ENCODE measurements at regions of chr12 and their contacts with region 1.

Region 1: DNA sequence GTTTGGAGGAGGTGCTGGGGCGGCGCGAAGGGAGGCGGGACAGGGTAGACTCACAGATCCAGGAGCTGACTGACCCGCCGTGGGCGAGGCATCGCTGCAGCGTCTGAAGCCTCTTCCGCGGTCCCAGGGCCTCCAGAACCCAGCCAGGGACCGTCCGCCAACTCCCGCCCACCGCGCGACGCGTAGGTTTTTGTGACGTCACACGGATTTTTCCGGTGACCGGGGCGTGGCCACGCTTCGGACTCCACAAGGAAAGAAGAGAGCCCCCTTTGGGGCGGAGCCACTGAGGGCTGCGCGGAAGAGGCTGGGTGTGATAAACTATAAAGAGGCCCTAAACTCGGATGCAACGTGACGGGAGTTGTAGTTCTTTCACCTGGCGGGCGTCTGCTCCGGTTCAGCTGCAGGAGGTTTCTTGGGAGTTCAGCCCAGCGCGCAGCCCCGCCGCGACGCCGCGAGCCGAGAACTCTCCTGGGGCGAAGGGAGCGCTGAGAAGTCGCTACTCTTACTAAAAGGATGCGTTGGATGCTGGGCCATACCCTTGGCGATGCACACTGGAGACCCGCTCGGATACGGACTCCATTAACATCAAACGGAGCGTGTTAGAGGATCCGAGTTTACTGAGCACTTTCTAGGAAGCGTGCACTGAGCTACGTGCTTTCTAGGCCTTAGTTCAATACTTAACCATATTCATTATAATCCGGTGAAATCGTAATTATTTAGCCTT is at the start of gene AMN1:
- DNase-seq: peak; percentile 99
- ATAC-seq: peak; percentile 98
- H3K4me3 ChIP-seq: peak within 1 kb of the TSS; percentile 79
- H3K27ac ChIP-seq: peak within 1 kb of the TSS; percentile 83
- H3K4me1 ChIP-seq: peaks cover 4% of the 10 kb centered on the region; the same call in 1 of the 2 replicates
- H3K27me3 ChIP-seq: no peaks in the 10 kb centered on the region
- CTCF ChIP-seq: peak; percentile 15; the same call in 1 of the 2 replicates
- POLR2A ChIP-seq: peak; percentile 71
- RAD21 ChIP-seq: no peak
- total RNA-seq, gene AMN1: 3.4 and 6.1 TPM in 2 replicates

Region 2: DNA sequence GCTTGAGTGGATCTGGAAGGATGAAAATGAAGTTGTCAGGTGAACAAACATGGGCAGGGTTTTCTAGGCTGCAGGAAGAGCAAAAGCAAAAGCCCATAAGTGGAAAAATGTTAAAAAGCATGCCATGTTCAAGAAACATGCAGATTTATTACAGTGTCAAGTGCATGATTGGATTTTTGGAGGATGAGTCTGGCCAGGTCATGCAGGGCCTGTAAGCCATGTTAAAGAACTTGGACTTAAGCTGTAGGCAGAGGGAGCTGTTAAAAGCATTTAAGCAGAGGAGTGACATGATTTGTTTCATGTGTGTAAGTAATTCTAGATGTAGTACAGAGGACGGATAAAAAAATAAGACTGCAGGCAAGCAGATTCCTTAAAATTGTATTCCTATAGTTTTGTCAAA is 386.8 kb before region 1 on chr12:
- CTCF ChIA-PET with region 1: no interaction called
- POLR2A ChIA-PET with region 1: no interaction called
- dilution Hi-C with region 1: no loop called
- in situ Hi-C with region 1: no loop called
- intact Hi-C with region 1: no loop called
- DNase-seq: no peak
- ATAC-seq: no peak
- H3K4me3 ChIP-seq: no peak overlapping the region
- H3K27ac ChIP-seq: no peak overlapping the region
- H3K4me1 ChIP-seq: no peaks in the 10 kb centered on the region
- H3K27me3 ChIP-seq: peaks cover 7% of the 10 kb centered on the region
- CTCF ChIP-seq: no peak
- POLR2A ChIP-seq: no peak
- RAD21 ChIP-seq: no peak

Region 3: GRCh38 chr12:31749024-31749704 is 20.1 kb after region 1 on chr12:
- CTCF ChIA-PET with region 1: no interaction called
- POLR2A ChIA-PET with region 1: no interaction called
- dilution Hi-C with region 1: no loop called
- in situ Hi-C with region 1: no loop called
- intact Hi-C with region 1: loop called (anchors 2 kb)
- DNase-seq: peak; percentile 98
- ATAC-seq: peak; percentile 73
- H3K4me3 ChIP-seq: no peak overlapping the region
- H3K27ac ChIP-seq: peak overlapping the region; percentile 44; the same call in 1 of the 2 replicates
- H3K4me1 ChIP-seq: peaks cover 2% of the 10 kb centered on the region; the same call in 1 of the 2 replicates
- H3K27me3 ChIP-seq: no peaks in the 10 kb centered on the region
- CTCF ChIP-seq: no peak
- POLR2A ChIP-seq: no peak
- RAD21 ChIP-seq: no peak

Region 4: DNA sequence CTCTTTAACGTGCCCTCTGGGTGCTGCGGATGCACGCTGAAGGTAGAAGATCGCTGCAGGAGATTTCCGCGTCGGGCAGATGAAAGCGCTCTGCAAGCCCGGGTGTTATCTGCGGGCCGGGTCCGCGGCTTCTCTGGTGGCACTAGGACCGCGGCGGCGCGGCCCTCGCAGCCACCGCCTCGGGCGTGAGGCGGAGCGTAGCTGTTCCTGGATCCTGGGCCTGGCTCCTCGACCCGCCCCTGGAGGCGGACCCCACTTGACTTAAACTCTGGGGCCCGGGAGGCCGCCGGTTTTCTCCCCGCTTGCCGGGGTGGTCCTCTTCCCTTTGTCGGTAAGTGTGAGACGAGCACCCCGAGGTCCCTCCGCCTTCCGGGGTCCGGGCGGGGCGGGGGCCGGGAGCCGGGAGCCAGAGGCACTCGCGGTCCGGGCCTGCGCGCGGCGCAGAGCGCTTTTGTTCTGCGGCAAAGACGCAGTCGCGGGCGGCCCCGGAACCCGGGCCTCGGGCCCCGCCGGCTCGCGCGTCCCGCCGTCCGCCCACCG is 230.2 kb after region 1 on chr12 and contains the start of gene RESF1:
- CTCF ChIA-PET with region 1: no interaction called
- POLR2A ChIA-PET with region 1: no interaction called
- dilution Hi-C with region 1: no loop called
- in situ Hi-C with region 1: no loop called
- intact Hi-C with region 1: loop called (anchors 2 kb)
- DNase-seq: peak; percentile 76
- ATAC-seq: peak; percentile 98
- H3K4me3 ChIP-seq: peak within 1 kb of the TSS; percentile 61
- H3K27ac ChIP-seq: peak within 1 kb of the TSS; percentile 61
- H3K4me1 ChIP-seq: peaks cover 3% of the 10 kb centered on the region
- H3K27me3 ChIP-seq: no peaks in the 10 kb centered on the region
- CTCF ChIP-seq: 0 out of 2 replicates have a peak, but pooled peaks have one; percentile 4
- POLR2A ChIP-seq: 0 out of 2 replicates have a peak, but pooled peaks have one; percentile 48
- RAD21 ChIP-seq: peak; percentile 1; the same call in 1 of the 2 replicates
- total RNA-seq, gene RESF1: 7.3 and 10.3 TPM in 2 replicates